Naive thymus-derived CD4-positive, alpha-beta T cell (primary cell): ENCODE measurements at regions of chr7 and their contacts with region 1.

Region 1: GRCh38 chr7:155796381-155797261 is 15.6 kb downstream of the SHH start:
- DNase-seq: peak; percentile 23 to 80 (median 54)
- ATAC-seq: peak; percentile 79
- H3K4me3 ChIP-seq: no peak overlapping the region
- H3K4me3 Mint-ChIP-seq: no peak overlapping the region
- H3K27ac ChIP-seq: no peak overlapping the region
- H3K27ac Mint-ChIP-seq: no peak overlapping the region
- H3K4me1 ChIP-seq: no peaks in the 10 kb centered on the region
- H3K4me1 Mint-ChIP-seq: peaks cover 0 to 12% (median 8%) of the 10 kb centered on the region in 7 donors
- H3K27me3 ChIP-seq: peaks cover 0 to 3% of the 10 kb centered on the region in 2 donors
- H3K27me3 Mint-ChIP-seq: peaks cover 28 to 45% (median 33%) of the 10 kb centered on the region in 5 donors

Region 2: GRCh38 chr7:155724327-155725005 is 72.2 kb before region 1 on chr7:
- CTCF ChIA-PET with region 1: no interaction called
- POLR2A ChIA-PET with region 1: no interaction called
- intact Hi-C with region 1: no loop called
- DNase-seq: no peak
- ATAC-seq: peak; percentile 51
- H3K4me3 ChIP-seq: no peak overlapping the region
- H3K4me3 Mint-ChIP-seq: no peak overlapping the region
- H3K27ac ChIP-seq: no peak overlapping the region
- H3K27ac Mint-ChIP-seq: peak overlapping the region in 4 of 9 donors; percentile 0 to 56 (median 22)
- H3K4me1 ChIP-seq: no peaks in the 10 kb centered on the region
- H3K4me1 Mint-ChIP-seq: peaks cover 11 to 58% (median 43%) of the 10 kb centered on the region in 7 donors
- H3K27me3 ChIP-seq: no peaks in the 10 kb centered on the region
- H3K27me3 Mint-ChIP-seq: no peaks in the 10 kb centered on the region

Region 3: DNA sequence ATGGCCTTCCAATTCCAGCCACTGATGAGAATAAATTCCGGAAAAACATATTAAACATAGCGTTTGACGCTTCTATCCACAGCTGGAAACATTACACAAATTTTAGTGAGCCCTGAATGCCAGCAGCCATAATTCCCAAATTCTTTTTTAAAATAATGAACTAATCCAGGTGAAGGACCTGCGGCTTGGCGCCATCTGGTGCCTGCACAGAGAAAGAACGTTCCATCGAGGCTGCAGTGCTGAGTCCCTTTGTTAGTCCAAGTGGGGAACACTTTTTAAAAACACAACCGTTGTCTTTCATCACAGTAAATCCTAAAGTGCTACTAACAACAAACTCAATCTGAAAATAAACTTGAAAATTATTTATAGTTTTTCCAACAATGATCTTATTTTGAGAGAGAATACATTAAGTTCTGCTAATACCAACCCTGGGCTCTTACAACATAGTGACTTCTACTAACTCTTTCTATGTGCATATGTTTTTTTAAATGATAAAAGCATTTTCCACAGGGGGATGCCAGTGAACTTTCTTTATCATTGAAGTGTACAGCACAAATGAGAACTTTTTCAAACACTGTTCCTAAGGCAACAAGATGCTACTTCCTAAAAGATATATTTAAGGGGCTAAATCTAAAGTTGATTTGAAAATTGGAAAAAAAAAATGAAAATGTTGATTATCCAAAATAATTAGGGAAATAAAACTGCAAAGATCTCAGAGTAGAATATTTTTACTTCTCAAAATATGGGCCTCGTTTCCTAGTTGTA is 677.0 kb after region 1 on chr7:
- CTCF ChIA-PET with region 1: no interaction called
- POLR2A ChIA-PET with region 1: no interaction called
- intact Hi-C with region 1: loop called in 1 of 2 experiments (anchors 5 kb)
- DNase-seq: peak in 2 of 9 donors; percentile 8 to 9
- ATAC-seq: no peak
- H3K4me3 ChIP-seq: no peak overlapping the region
- H3K4me3 Mint-ChIP-seq: no peak overlapping the region
- H3K27ac ChIP-seq: no peak overlapping the region
- H3K27ac Mint-ChIP-seq: no peak overlapping the region
- H3K4me1 ChIP-seq: no peaks in the 10 kb centered on the region
- H3K4me1 Mint-ChIP-seq: no peaks in the 10 kb centered on the region
- H3K27me3 ChIP-seq: no peaks in the 10 kb centered on the region
- H3K27me3 Mint-ChIP-seq: peaks cover 21 to 50% (median 27%) of the 10 kb centered on the region in 5 donors